HepG2 (cell line): ENCODE measurements at regions of chr1 and their contacts with region 1.

Region 1: DNA sequence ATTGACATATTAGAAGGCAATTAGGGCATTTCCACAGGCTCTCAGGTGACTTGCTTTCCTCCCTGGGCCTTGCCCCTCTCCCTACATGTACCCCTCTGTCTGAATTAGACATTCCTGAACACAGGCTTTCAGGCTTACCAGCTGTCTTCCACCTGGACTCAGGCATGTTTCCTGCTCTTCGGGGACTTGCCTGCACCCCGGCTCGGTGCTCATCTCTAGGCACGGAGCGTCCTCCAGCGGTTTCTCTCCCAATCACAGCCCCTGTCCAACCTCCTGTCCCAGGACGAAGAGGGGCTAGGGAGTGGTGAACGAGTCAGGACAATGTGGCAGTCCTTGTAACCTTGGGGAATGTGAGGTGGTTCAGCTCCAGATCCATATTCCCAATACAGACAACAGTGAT is 4.2 kb downstream of the PROK1 start:
- DNase-seq: no peak
- ATAC-seq: peak; percentile 51; the same call in 2 of the 3 replicates
- H3K4me3 ChIP-seq: no peak overlapping the region
- H3K27ac ChIP-seq: no peak overlapping the region
- H3K4me1 ChIP-seq: no peaks in the 10 kb centered on the region
- H3K27me3 ChIP-seq: peaks cover 1 to 23% of the 10 kb centered on the region in 2 experiments; a peak in 3 of 5 replicates
- CTCF ChIP-seq: peak; percentile 63
- EP300 ChIP-seq: no peak
- POLR2A ChIP-seq: no peak
- RAD21 ChIP-seq: no peak

Region 2: DNA sequence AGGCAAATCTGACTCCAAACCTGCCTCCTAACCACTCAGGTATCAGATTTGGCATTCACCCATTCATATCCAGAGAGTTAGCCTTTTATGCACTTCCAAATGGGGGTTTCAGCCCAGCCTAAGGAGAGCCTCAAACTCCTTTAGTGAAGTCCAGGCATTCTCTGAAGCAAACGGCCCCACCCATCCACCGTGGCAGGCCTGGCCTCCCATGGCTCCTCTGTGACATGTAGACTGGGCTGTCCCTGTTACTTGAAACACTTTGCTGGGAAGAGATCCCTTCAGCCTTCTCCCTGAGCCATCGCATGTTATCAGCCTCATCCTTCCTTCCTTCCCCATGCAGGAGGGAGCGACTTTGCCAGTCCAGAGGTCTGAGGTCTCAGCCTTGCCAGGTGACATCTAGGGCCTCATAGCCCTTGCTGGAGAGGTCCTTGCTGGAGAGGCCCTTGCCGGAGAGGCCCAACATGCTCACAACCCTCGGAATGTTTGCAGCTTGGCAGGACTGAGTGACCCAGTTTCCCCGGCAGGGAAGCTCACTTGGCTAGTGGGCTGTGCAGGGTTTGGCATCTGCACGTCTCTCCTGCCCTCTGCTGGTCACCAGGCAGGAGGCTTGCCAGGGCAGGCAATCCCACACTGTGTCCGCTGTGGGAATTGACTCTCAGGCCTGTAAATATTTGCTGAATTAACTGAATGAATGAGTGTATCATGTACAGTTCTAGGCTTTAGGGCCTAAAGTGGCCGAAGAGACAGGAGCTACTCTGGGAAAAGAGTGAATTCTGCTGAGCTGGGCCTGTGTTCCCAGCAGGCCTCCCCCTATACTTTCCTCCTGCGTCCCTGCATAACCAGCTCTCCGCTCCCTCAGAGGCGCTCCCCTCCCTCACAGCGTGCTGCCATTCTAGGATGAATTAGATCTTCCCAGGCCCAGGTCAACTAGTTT is 142.7 kb before region 1 on chr1:
- CTCF ChIA-PET with region 1: interaction called, 3 read pairs
- POLR2A ChIA-PET with region 1: no interaction called
- in situ Hi-C with region 1: loop called (anchors 10 kb)
- intact Hi-C with region 1: no loop called
- DNase-seq: peak; percentile 59
- ATAC-seq: peak; percentile 99
- H3K4me3 ChIP-seq: peak overlapping the region in 1 of 3 experiments; percentile 4; a peak in 1 of 6 replicates
- H3K27ac ChIP-seq: no peak overlapping the region
- H3K4me1 ChIP-seq: peaks cover 8% of the 10 kb centered on the region; the same call in 1 of the 2 replicates
- H3K27me3 ChIP-seq: peaks cover 0 to 5% of the 10 kb centered on the region in 2 experiments; a peak in 2 of 5 replicates
- CTCF ChIP-seq: peak; percentile 97
- EP300 ChIP-seq: no peak
- POLR2A ChIP-seq: no peak
- RAD21 ChIP-seq: peak; percentile 94

Region 3: GRCh38 chr1:110380672-110381283 is 74.4 kb before region 1 on chr1:
- CTCF ChIA-PET with region 1: no interaction called
- POLR2A ChIA-PET with region 1: no interaction called
- in situ Hi-C with region 1: no loop called
- intact Hi-C with region 1: no loop called
- DNase-seq: no peak
- ATAC-seq: no peak
- H3K4me3 ChIP-seq: no peak overlapping the region
- H3K27ac ChIP-seq: no peak overlapping the region
- H3K4me1 ChIP-seq: no peaks in the 10 kb centered on the region
- H3K27me3 ChIP-seq: no peaks in the 10 kb centered on the region
- CTCF ChIP-seq: no peak
- EP300 ChIP-seq: no peak
- POLR2A ChIP-seq: no peak
- RAD21 ChIP-seq: no peak

Region 4: DNA sequence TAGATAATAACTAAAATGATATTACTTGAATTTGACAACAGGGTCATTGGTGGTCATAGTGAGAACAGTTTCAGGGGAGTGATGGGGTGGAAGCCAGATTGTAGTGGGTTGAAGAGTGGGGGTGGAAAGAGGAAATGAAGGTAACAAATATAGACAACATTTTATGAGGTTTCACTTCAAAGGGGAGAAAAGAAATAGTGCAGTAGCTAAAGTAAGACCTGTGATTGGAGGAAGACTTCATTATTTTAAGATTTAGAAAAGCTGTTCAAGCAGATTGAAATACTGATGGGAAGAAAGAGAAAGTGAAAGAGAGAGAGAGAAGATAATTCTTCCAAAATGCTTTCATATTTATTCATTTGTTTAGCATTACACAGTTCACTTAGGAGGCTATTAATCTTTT is 271.6 kb after region 1 on chr1:
- CTCF ChIA-PET with region 1: no interaction called
- POLR2A ChIA-PET with region 1: no interaction called
- in situ Hi-C with region 1: no loop called
- intact Hi-C with region 1: no loop called
- DNase-seq: no peak
- ATAC-seq: no peak
- H3K4me3 ChIP-seq: no peak overlapping the region
- H3K27ac ChIP-seq: no peak overlapping the region
- H3K4me1 ChIP-seq: no peaks in the 10 kb centered on the region
- H3K27me3 ChIP-seq: peaks cover 0 to 13% of the 10 kb centered on the region in 2 experiments; a peak in 2 of 5 replicates
- CTCF ChIP-seq: no peak
- EP300 ChIP-seq: no peak
- POLR2A ChIP-seq: no peak
- RAD21 ChIP-seq: no peak